Activated CD8-positive, alpha-beta T cell treated with anti-CD3 and anti-CD28 coated beads, Interleukin-2, amount 10 ng/mL, durations not matched to agents 7 days and 5 days (primary cell): ENCODE measurements at regions of chr17 and their contacts with region 1.

Region 1: DNA sequence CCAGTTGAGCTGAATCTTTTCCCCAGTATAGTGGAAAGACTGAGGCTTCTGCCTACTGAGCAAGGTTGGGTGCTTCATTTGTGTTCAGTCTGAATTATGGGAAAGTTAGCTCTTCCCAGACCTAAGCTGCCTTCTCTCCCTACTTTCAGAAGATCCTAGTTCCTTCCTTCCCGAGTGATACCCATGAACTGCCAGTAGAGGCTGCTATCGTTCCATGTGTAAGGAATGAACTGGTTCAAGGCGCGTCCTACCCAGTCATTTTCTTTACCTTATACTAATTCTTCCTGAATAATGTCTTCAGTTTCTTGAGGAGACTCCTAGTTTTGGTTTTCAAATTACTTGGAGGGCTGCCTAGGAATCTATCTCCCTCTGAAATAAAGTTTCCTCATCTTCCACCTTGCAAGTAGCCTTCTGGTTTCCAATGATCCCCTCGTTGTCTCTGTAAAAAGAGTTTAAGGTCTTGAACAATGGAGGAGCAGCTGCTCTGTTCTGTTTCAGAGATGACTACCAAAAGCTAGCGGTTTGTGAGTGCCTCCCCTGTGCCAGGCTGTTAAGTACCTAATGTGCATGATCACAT is 934 bp upstream of the AOC2 start:
- DNase-seq: no peak
- ATAC-seq: no peak
- H3K4me3 Mint-ChIP-seq: no peak overlapping the region
- H3K27ac Mint-ChIP-seq: no peak overlapping the region
- H3K4me1 Mint-ChIP-seq: peaks cover 11% of the 10 kb centered on the region
- H3K27me3 Mint-ChIP-seq: no peaks in the 10 kb centered on the region

Region 2: GRCh38 chr17:42832974-42833766 is 10.3 kb before region 1 on chr17 and contains the start of gene PSME3:
- CTCF ChIA-PET with region 1: interaction called, 12 read pairs
- POLR2A ChIA-PET with region 1: interaction called, 8 read pairs
- DNase-seq: peak; percentile 92
- ATAC-seq: peak; percentile 94
- H3K4me3 Mint-ChIP-seq: peak within 1 kb of the TSS; percentile 94
- H3K27ac Mint-ChIP-seq: peak within 1 kb of the TSS; percentile 100
- H3K4me1 Mint-ChIP-seq: peaks cover 25% of the 10 kb centered on the region
- H3K27me3 Mint-ChIP-seq: no peaks in the 10 kb centered on the region
- total RNA-seq, gene PSME3: 141 to 145 TPM